B cell (primary cell): ENCODE measurements at regions of chr13 and their contacts with region 1.

Region 1: DNA sequence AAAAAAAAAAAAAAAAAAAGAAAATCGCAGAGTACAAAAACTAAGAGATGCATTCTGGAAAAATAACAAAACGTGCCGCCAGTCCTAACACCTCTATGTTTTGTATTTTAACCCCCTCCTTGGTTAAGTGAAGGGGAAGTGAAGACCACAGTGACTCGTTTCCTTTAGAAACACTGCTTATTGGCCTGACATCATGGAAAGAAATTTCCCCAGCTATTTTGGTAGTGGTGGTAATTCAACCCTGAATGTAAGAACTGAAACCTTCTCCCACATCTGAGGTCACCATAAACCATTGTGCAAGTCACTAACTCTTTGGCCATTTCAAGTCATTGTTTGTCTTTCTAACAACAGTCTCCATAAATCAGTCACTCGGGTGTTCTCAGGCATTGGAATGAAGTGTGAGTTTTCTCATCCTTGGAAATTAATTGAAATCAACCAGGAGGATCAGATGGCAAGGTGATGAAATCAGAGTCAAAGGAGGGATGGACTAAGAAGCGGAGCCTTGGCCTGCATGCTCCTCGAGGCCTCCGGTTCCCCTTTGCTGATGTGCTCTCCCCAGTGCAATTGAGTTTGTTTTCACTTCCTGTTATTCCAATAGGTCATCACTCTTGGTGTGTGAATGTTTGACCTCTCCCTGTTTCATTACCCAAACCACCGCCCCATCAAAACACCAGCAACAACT is 443.9 kb downstream of the FGF9 start:
- DNase-seq: peak; percentile 93
- ATAC-seq: peak; percentile 84
- H3K4me3 ChIP-seq: peak overlapping the region in 1 of 5 experiments; percentile 4
- H3K4me3 Mint-ChIP-seq: peak overlapping the region; percentile 82
- H3K27ac ChIP-seq: peak overlapping the region; percentile 89 to 90
- H3K27ac Mint-ChIP-seq: peak overlapping the region; percentile 98
- H3K4me1 ChIP-seq: peaks cover 31 to 36% of the 10 kb centered on the region in 2 donors
- H3K4me1 Mint-ChIP-seq: peaks cover 45% of the 10 kb centered on the region
- H3K27me3 ChIP-seq: no peaks in the 10 kb centered on the region
- H3K27me3 Mint-ChIP-seq: no peaks in the 10 kb centered on the region
- CTCF ChIP-seq: no peak

Region 2: GRCh38 chr13:22061351-22061805 is 53.4 kb before region 1 on chr13:
- CTCF ChIA-PET with region 1: interaction called, 17 read pairs
- POLR2A ChIA-PET with region 1: no interaction called
- intact Hi-C with region 1: loop called (anchors 1 kb)
- DNase-seq: no peak
- ATAC-seq: peak; percentile 42
- H3K4me3 ChIP-seq: peak overlapping the region in 2 of 5 experiments; percentile 25 to 34
- H3K4me3 Mint-ChIP-seq: peak overlapping the region; percentile 58
- H3K27ac ChIP-seq: peak overlapping the region; percentile 69 to 81
- H3K27ac Mint-ChIP-seq: peak overlapping the region; percentile 89
- H3K4me1 ChIP-seq: peaks cover 35% of the 10 kb centered on the region in 2 donors
- H3K4me1 Mint-ChIP-seq: peaks cover 49% of the 10 kb centered on the region
- H3K27me3 ChIP-seq: no peaks in the 10 kb centered on the region
- H3K27me3 Mint-ChIP-seq: no peaks in the 10 kb centered on the region
- CTCF ChIP-seq: no peak

Region 3: DNA sequence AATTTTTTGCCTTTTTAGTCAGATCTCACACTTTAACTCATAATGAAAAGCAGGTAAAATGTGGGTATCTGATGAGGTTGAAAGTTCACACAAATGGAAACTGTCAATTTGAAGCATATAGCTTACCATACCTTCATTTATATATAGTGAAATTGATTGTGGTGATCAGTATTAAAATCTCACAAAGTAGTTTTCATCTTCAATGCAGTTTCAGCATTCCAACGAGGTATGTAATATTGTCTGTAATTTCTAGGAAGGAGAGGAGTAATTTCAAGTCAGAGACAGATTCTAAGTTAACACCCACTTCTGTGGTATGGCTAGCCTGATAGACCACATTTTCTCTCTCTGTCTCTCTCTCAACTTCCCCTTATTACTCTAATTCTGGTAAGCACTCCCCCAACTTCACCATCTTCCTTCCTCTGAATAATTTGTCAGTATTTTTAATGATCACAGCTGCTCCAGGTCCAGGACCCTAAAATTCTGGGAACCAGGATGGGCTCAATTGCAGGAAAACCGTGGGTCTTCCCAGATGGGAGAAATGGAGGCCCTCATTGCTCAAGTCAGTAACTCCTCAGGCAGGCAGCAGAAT is 11.8 kb after region 1 on chr13:
- CTCF ChIA-PET with region 1: interaction called, 3 read pairs
- POLR2A ChIA-PET with region 1: interaction called, 10 read pairs
- intact Hi-C with region 1: no loop called
- DNase-seq: peak; percentile 63
- ATAC-seq: peak; percentile 95
- H3K4me3 ChIP-seq: no peak overlapping the region
- H3K4me3 Mint-ChIP-seq: peak overlapping the region; percentile 36
- H3K27ac ChIP-seq: peak overlapping the region in 1 of 2 donors; percentile 27
- H3K27ac Mint-ChIP-seq: no peak overlapping the region
- H3K4me1 ChIP-seq: peaks cover 19 to 25% of the 10 kb centered on the region in 2 donors
- H3K4me1 Mint-ChIP-seq: peaks cover 32% of the 10 kb centered on the region
- H3K27me3 ChIP-seq: no peaks in the 10 kb centered on the region
- H3K27me3 Mint-ChIP-seq: no peaks in the 10 kb centered on the region
- CTCF ChIP-seq: no peak

Region 4: DNA sequence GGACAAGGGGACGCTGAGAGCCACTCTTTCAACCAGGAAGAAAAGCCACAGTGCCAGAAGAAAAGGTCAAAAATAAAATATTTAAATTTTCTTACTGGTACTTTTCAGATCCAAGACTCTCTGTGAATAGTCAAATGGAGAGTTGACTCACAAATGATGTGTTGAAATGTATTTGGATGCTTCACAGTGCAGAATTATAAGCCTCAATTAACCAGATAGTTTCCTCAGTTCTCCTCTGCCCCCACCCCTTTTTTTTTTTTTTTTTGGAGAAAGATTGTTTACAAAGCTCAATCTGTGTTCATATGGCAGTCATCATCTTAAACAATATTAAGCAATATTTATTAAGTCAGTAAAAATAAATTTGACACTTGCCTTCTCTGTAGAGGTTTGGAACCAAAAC is 26.9 kb after region 1 on chr13:
- CTCF ChIA-PET with region 1: no interaction called
- POLR2A ChIA-PET with region 1: no interaction called
- intact Hi-C with region 1: no loop called
- DNase-seq: no peak
- ATAC-seq: no peak
- H3K4me3 ChIP-seq: no peak overlapping the region
- H3K4me3 Mint-ChIP-seq: no peak overlapping the region
- H3K27ac ChIP-seq: no peak overlapping the region
- H3K27ac Mint-ChIP-seq: no peak overlapping the region
- H3K4me1 ChIP-seq: peaks cover 7 to 10% of the 10 kb centered on the region in 2 donors
- H3K4me1 Mint-ChIP-seq: peaks cover 11% of the 10 kb centered on the region
- H3K27me3 ChIP-seq: peaks cover 0 to 3% (median 0%) of the 10 kb centered on the region in 4 experiments
- H3K27me3 Mint-ChIP-seq: no peaks in the 10 kb centered on the region
- CTCF ChIP-seq: no peak

Region 5: DNA sequence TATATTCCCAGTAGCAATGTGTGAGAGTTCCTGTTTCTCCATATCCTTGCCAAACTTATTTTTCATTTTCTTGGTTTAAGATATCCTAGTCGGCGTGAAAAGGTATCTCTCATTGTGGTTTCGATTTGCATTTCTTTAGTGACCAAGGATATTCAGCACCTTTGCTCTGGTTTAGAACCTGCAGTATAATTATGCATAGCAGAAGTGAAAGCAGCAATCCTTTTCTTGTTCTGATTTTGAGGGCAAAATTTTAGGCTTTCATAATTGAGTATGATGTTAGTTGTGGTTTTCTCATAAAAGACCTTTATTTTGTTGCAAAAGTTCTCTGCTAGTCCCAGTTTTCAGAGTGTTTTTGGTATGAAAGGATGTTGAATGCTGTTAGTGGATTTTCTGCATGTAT is 47.1 kb after region 1 on chr13:
- CTCF ChIA-PET with region 1: no interaction called
- POLR2A ChIA-PET with region 1: no interaction called
- intact Hi-C with region 1: loop called (anchors 1 kb)
- DNase-seq: peak; percentile 52
- ATAC-seq: peak; percentile 73
- H3K4me3 ChIP-seq: peak overlapping the region in 1 of 5 experiments; percentile 13
- H3K4me3 Mint-ChIP-seq: peak overlapping the region; percentile 75
- H3K27ac ChIP-seq: no peak overlapping the region
- H3K27ac Mint-ChIP-seq: peak overlapping the region; percentile 42
- H3K4me1 ChIP-seq: peaks cover 10 to 17% of the 10 kb centered on the region in 2 donors
- H3K4me1 Mint-ChIP-seq: peaks cover 24% of the 10 kb centered on the region
- H3K27me3 ChIP-seq: no peaks in the 10 kb centered on the region
- H3K27me3 Mint-ChIP-seq: no peaks in the 10 kb centered on the region
- CTCF ChIP-seq: no peak

Region 6: DNA sequence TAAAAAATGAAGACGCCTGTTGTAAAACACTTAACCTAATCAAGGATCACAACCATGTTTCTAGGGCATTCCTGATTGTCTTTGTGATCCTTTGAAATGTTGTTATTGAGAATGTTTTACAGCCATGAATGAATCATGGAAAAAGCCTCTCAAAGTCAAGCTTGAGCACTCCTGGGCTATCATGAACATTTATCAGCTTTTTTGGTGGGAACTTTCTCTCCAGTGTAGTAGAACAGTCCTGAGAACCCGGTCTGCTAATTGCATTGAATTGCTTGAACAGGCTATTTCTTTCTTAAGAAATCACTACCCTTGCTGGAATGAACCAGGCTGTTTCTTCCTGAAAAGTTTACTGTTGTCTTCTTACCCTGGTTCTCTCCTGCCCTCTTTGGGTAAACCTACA is 72.6 kb after region 1 on chr13:
- CTCF ChIA-PET with region 1: no interaction called
- POLR2A ChIA-PET with region 1: no interaction called
- intact Hi-C with region 1: no loop called
- DNase-seq: no peak
- ATAC-seq: no peak
- H3K4me3 ChIP-seq: no peak overlapping the region
- H3K4me3 Mint-ChIP-seq: no peak overlapping the region
- H3K27ac ChIP-seq: no peak overlapping the region
- H3K27ac Mint-ChIP-seq: no peak overlapping the region
- H3K4me1 ChIP-seq: no peaks in the 10 kb centered on the region
- H3K4me1 Mint-ChIP-seq: peaks cover 4% of the 10 kb centered on the region
- H3K27me3 ChIP-seq: no peaks in the 10 kb centered on the region
- H3K27me3 Mint-ChIP-seq: no peaks in the 10 kb centered on the region
- CTCF ChIP-seq: no peak

Region 7: GRCh38 chr13:22278336-22278929 is 163.7 kb after region 1 on chr13:
- CTCF ChIA-PET with region 1: no interaction called
- POLR2A ChIA-PET with region 1: no interaction called
- intact Hi-C with region 1: loop called (anchors 2 kb)
- DNase-seq: peak; percentile 75
- ATAC-seq: peak; percentile 74
- H3K4me3 ChIP-seq: no peak overlapping the region
- H3K4me3 Mint-ChIP-seq: no peak overlapping the region
- H3K27ac ChIP-seq: no peak overlapping the region
- H3K27ac Mint-ChIP-seq: no peak overlapping the region
- H3K4me1 ChIP-seq: no peaks in the 10 kb centered on the region
- H3K4me1 Mint-ChIP-seq: peaks cover 6% of the 10 kb centered on the region
- H3K27me3 ChIP-seq: no peaks in the 10 kb centered on the region
- H3K27me3 Mint-ChIP-seq: no peaks in the 10 kb centered on the region
- CTCF ChIP-seq: peak; percentile 77

Region 8: DNA sequence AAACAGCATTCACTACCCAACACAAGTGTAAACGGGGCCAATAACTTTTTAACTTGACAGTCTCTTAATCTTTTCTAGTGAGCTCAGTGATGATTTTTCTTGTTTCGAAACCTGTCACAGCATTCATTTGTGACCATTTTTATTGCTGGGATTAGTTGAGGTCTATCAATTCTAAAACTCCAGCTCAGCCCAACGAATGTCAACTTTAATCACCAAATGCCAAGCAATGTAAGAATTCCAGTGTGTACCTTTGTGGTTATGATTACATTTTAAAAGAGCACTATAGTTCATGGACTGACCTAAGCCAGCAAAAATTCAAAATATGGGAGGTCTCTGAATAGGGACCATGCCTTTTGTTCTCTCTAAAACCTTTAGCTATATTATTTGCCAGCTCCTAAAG is 371.7 kb after region 1 on chr13:
- CTCF ChIA-PET with region 1: no interaction called
- POLR2A ChIA-PET with region 1: no interaction called
- intact Hi-C with region 1: no loop called
- DNase-seq: no peak
- ATAC-seq: no peak
- H3K4me3 ChIP-seq: no peak overlapping the region
- H3K4me3 Mint-ChIP-seq: no peak overlapping the region
- H3K27ac ChIP-seq: no peak overlapping the region
- H3K27ac Mint-ChIP-seq: no peak overlapping the region
- H3K4me1 ChIP-seq: no peaks in the 10 kb centered on the region
- H3K4me1 Mint-ChIP-seq: no peaks in the 10 kb centered on the region
- H3K27me3 ChIP-seq: no peaks in the 10 kb centered on the region
- H3K27me3 Mint-ChIP-seq: no peaks in the 10 kb centered on the region
- CTCF ChIP-seq: no peak